HEK293 (cell line): ENCODE measurements at regions of chrX and their contacts with region 1.

Region 1: DNA sequence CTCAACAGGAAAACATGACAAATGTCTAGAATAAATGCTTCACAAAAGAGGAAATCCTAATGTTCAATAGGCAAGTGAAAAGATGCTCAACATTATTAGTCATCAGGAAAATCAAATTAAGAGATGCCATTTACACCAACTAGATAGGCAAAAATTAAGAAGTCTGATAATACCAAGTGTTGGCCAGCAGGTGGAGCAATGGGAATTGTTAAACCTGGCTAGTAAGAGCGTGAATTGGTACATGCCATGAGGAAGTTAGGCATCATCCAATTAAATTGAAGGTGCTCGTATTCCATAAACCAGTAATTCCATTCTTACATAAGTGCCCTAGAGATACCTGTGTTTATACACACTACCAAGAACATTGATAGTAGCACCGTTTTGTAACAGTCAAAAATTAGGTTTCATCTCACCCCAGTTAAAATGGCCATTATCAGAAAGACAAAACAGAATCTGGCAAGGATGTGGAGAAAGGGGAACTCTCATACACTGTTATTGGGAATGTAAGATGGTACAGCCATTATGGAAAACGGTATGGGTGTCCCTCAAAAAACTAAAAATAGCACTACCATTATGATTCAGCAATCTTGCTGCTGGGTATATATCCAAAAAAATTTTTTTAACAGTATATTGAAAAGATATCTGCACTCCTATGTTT is 14.0 kb upstream of the ZCCHC18 start:
- H3K4me3 ChIP-seq: no peak overlapping the region
- H3K27ac ChIP-seq: no peak overlapping the region
- H3K4me1 ChIP-seq: no peaks in the 10 kb centered on the region
- CTCF ChIP-seq: peak; percentile 37; the same call in 1 of the 2 replicates

Region 2: DNA sequence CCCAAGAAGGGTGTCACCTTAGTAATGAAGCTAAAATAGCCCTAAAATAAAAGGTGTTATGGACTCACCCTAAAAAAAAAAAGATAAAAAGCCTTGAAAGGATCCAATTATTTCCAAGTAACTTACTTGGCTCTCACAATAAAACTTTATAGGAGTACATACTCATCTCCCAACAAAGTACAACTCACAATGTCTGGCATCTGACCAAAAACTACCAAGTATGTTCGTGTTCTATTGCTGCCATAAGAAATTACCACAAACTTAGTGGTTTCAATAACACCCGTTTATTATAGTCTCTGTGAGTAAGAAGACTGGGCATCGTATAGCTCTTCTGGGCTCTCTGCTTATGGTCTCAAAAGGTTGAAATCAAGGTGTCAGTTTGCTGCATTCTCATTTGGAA is 1085.3 kb before region 1 on chrX:
- CTCF ChIA-PET with region 1: no interaction called
- POLR2A ChIA-PET with region 1: no interaction called
- H3K4me3 ChIP-seq: no peak overlapping the region
- H3K27ac ChIP-seq: no peak overlapping the region
- H3K4me1 ChIP-seq: no peaks in the 10 kb centered on the region
- CTCF ChIP-seq: no peak

Region 3: GRCh38 chrX:104113222-104113965 is 15.1 kb after region 1 on chrX:
- CTCF ChIA-PET with region 1: interaction called, 16 read pairs
- POLR2A ChIA-PET with region 1: no interaction called
- H3K4me3 ChIP-seq: peak overlapping the region; percentile 57
- H3K27ac ChIP-seq: no peak overlapping the region
- H3K4me1 ChIP-seq: no peaks in the 10 kb centered on the region
- CTCF ChIP-seq: peak; percentile 58

Region 4: GRCh38 chrX:104432256-104432655 is 334.0 kb after region 1 on chrX:
- CTCF ChIA-PET with region 1: no interaction called
- POLR2A ChIA-PET with region 1: no interaction called
- H3K4me3 ChIP-seq: no peak overlapping the region
- H3K27ac ChIP-seq: no peak overlapping the region
- H3K4me1 ChIP-seq: no peaks in the 10 kb centered on the region
- CTCF ChIP-seq: no peak